ENCODE measurements at regions of chr1 and their contacts with region 1.

Region 1: DNA sequence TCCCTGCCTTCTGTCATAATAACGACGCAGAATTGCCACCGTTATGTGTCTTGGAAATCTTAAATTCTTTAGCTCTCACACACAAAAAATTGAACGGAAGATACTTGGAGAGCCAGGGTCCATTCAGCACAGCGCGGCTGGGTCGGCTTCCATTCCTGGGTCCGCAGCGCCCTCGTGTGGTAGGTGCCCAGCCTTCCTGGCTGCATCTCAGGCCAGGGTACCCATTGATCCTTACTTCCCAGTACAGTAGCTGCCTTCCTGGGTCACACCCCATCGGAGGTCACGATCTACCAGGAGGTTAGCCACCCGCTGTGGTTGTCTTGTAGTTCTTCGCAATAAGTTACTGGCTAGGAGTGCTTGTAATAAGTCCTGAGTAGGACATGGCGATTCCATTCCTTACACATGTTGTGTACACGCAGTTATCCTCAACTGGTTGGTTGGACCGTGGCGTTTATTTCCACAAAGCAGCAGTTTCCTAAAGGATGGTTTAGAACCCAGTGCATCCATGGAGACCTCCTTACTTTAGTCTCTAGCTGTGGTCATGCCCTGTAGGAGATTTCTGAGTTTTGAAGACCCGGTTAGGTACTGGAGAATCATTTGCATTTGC is 9.9 kb upstream of the MTARC1 start:
- DNase-seq: peak; percentile 83 to 87 (median 86)
- ATAC-seq: peak; percentile 100
- H3K4me3 ChIP-seq: no peak overlapping the region
- H3K27ac ChIP-seq: no peak overlapping the region
- H3K4me1 ChIP-seq: no peaks in the 10 kb centered on the region
- H3K27me3 ChIP-seq: peaks cover 0 to 7% of the 10 kb centered on the region in 2 experiments; a peak in 1 of 5 replicates
- CTCF ChIP-seq: peak; percentile 88 to 97 (median 91)
- EP300 ChIP-seq: no peak
- POLR2A ChIP-seq: no peak
- RAD21 ChIP-seq: peak; percentile 93 to 95

Region 2: DNA sequence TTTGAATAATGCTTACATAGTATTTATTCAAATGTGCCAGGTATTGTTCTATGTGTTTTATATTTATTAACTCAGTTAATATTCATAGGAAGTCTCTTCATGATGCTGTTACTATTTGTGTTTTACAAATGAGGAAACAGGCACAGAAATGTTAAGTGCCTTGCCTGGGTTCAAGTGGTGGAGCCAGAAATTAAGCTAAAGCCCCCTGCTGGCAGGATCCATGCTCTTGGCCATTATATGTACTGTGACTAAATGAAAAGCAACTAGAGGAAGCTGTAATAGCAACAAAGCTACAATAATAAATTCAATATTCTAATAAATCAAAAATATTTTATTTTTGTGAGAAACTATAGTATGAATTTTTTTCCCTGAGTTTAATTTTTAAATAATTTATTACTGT is 652.9 kb before region 1 on chr1:
- CTCF ChIA-PET with region 1: no interaction called
- POLR2A ChIA-PET with region 1: no interaction called
- in situ Hi-C with region 1: no loop called
- intact Hi-C with region 1: no loop called
- DNase-seq: peak in 3 of 4 experiments; percentile 22 to 42 (median 28)
- ATAC-seq: peak; percentile 73
- H3K4me3 ChIP-seq: no peak overlapping the region
- H3K27ac ChIP-seq: no peak overlapping the region
- H3K4me1 ChIP-seq: peaks cover 0 to 6% of the 10 kb centered on the region in 2 experiments; a peak in 2 of 5 replicates
- H3K27me3 ChIP-seq: no peaks in the 10 kb centered on the region
- CTCF ChIP-seq: peak; percentile 41 to 56 (median 56)
- EP300 ChIP-seq: no peak
- POLR2A ChIP-seq: no peak
- RAD21 ChIP-seq: no peak

Region 3: GRCh38 chr1:220189750-220190347 is 587.0 kb before region 1 on chr1:
- CTCF ChIA-PET with region 1: interaction called, 10 read pairs
- POLR2A ChIA-PET with region 1: no interaction called
- in situ Hi-C with region 1: no loop called
- intact Hi-C with region 1: no loop called
- DNase-seq: peak; percentile 33 to 38 (median 35)
- ATAC-seq: peak; percentile 81
- H3K4me3 ChIP-seq: no peak overlapping the region
- H3K27ac ChIP-seq: no peak overlapping the region
- H3K4me1 ChIP-seq: no peaks in the 10 kb centered on the region
- H3K27me3 ChIP-seq: no peaks in the 10 kb centered on the region
- CTCF ChIP-seq: peak in 2 of 3 experiments; percentile 47 to 71; a peak in 3 of 6 replicates
- EP300 ChIP-seq: no peak
- POLR2A ChIP-seq: no peak
- RAD21 ChIP-seq: peak; percentile 49 to 77

Region 4: GRCh38 chr1:220281159-220281574 is 495.7 kb before region 1 on chr1:
- CTCF ChIA-PET with region 1: no interaction called
- POLR2A ChIA-PET with region 1: no interaction called
- in situ Hi-C with region 1: no loop called
- intact Hi-C with region 1: loop called (anchors 1 kb)
- DNase-seq: peak in 2 of 4 experiments; percentile 36 to 47
- ATAC-seq: peak; percentile 78
- H3K4me3 ChIP-seq: no peak overlapping the region
- H3K27ac ChIP-seq: no peak overlapping the region
- H3K4me1 ChIP-seq: no peaks in the 10 kb centered on the region
- H3K27me3 ChIP-seq: peaks cover 8 to 17% of the 10 kb centered on the region in 2 experiments; a peak in 4 of 5 replicates
- CTCF ChIP-seq: peak; percentile 52 to 73 (median 57); a peak in 5 of 6 replicates
- EP300 ChIP-seq: no peak; the same call in 1 of the 2 replicates
- POLR2A ChIP-seq: no peak
- RAD21 ChIP-seq: peak; percentile 69 to 89

Region 5: GRCh38 chr1:220353229-220354012 is 423.4 kb before region 1 on chr1:
- CTCF ChIA-PET with region 1: no interaction called
- POLR2A ChIA-PET with region 1: no interaction called
- in situ Hi-C with region 1: no loop called
- intact Hi-C with region 1: loop called (anchors 10 kb)
- DNase-seq: peak in 1 of 4 experiments; percentile 27
- ATAC-seq: peak; percentile 91
- H3K4me3 ChIP-seq: no peak overlapping the region
- H3K27ac ChIP-seq: no peak overlapping the region
- H3K4me1 ChIP-seq: 0 out of 5 replicates have a peak, but pooled peaks cover 0 to 3% of the 10 kb centered on the region in 2 experiments
- H3K27me3 ChIP-seq: peaks cover 8 to 14% of the 10 kb centered on the region in 2 experiments; a peak in 4 of 5 replicates
- CTCF ChIP-seq: peak; percentile 11 to 50 (median 40); a peak in 3 of 6 replicates
- EP300 ChIP-seq: no peak
- POLR2A ChIP-seq: no peak
- RAD21 ChIP-seq: no peak

Region 6: DNA sequence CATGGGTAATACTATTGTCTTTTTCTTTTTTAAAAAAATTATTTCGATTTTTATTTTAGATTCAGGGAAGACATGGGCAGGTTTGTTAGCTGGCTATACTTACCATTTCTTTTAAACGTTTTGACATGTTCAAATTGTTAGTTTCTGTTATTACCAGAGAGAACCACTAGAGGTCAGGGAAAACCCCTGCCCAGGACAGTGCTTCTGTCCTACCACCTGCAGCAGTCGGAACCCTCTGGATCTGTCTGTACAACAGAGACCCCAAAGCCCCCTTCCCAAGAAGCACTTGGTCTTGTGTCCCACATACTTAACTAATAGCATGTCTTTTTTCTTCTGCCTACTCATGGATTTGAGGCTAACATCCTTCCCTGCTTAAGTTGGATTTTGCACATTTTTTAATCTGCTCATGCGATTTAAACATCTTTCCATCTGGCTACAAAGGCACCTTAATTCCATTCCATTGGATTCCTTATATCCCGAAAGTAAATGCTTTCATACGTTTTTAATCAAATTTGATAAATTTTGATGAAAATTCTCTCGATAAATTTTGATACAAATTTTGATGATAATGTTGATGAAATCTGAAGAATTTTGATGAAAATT is 96.6 kb before region 1 on chr1:
- CTCF ChIA-PET with region 1: interaction called, 5 read pairs
- POLR2A ChIA-PET with region 1: no interaction called
- in situ Hi-C with region 1: no loop called
- intact Hi-C with region 1: loop called (anchors 1 kb)
- DNase-seq: peak; percentile 46 to 62 (median 51)
- ATAC-seq: peak; percentile 97
- H3K4me3 ChIP-seq: no peak overlapping the region
- H3K27ac ChIP-seq: no peak overlapping the region
- H3K4me1 ChIP-seq: no peaks in the 10 kb centered on the region
- H3K27me3 ChIP-seq: peaks cover 2 to 14% of the 10 kb centered on the region in 2 experiments; a peak in 2 of 5 replicates
- CTCF ChIP-seq: peak; percentile 71 to 78 (median 73)
- EP300 ChIP-seq: no peak
- POLR2A ChIP-seq: no peak
- RAD21 ChIP-seq: peak; percentile 61 to 69

Measured in K562 (cell line).